ENCODE measurements at regions of chr10 and their contacts with region 1.

Region 1: GRCh38 chr10:22251751-22252223 is 34.0 kb upstream of the EBLN1 start:
- DNase-seq: peak; percentile 89

Region 2: GRCh38 chr10:22316285-22317120 is 64.7 kb after region 1 on chr10 and contains the start of gene COMMD3:
- intact Hi-C with region 1: loop called in 1 of 2 experiments (anchors 5 kb)
- DNase-seq: peak; percentile 96
- total RNA-seq, gene COMMD3: 52.6 to 57.6 TPM